Posterior vena cava (tissue), 2 donors: ENCODE measurements at regions of chr4 and their contacts with region 1.

Region 1: GRCh38 chr4:157713342-157713741 is 459.5 kb downstream of the GASK1B start:
- DNase-seq: no peak

Region 2: DNA sequence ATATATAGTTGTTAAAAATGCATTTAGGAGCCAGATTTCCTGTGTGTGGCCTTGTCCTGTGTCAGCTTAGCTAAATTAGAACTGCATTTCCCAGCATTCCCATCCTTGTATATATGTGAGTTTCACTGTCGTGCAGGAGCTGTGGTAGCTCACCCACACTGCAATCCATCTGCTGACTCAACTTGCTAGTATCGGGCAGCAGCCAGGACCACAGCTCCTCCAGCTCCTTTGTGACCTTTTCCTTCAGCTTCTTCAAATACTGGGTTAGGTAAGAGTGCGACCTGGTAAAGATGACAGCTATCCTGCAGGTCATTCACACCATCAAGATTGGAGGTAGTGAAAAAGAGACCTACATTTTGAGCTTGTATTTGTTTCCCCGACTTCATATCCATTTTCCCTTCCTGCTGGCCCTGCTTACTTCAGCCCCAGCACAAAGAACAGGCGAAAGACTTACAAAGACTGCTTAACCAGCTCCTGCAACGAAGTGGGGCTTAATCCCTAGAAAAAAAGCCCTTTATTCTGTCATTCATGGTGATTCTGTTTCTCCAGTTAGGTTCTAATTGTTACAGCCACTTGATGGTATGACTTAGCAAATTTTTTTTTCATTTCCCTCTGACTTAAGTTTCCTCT is 1858.6 kb before region 1 on chr4:
- intact Hi-C with region 1: loop called in 1 of 2 experiments (anchors 10 kb)
- DNase-seq: no peak

Region 3: GRCh38 chr4:157687971-157688370 is 25.4 kb before region 1 on chr4:
- intact Hi-C with region 1: no loop called
- DNase-seq: no peak

Region 4: GRCh38 chr4:157791236-157791635 is 77.9 kb after region 1 on chr4:
- intact Hi-C with region 1: no loop called
- DNase-seq: no peak

Region 5: DNA sequence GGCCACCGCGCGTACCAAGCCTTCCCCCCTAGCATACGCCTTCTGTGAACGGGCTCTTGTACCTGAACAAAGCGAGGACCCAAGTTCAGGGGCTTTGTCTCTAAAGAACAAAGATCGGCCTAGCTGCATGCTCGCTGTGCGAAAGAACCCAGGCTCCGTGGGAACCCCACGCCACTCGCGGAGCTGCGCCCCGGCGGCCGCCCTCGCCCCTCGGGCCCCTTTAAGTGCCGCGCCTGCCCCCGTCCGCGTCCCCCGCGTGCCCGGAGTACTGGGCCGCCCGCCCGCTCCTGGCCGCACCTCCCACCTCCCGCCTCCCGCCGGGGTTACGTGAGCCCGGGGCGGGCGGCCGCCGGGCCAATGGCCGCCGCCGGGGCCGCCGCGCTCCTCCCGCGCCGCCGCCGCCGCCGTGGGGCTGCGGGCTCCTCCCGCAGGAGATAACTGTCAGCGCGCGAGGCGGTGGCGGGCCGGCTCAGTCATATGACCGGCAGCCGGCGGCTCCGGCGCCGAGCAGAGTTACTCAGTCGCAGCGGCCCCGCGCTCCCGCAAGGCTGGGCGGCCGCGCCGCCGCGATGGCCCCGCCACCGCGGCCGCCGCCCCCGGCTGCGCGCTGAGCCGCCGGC is 1055.3 kb after region 1 on chr4 and contains the start of gene FNIP2:
- intact Hi-C with region 1: no loop called
- DNase-seq: peak; percentile 93
- total RNA-seq, gene FNIP2: 37.9 to 93.0 TPM